Common myeloid progenitor, CD34-positive (primary cell): ENCODE measurements at regions of chrX and their contacts with region 1.

Region 1: DNA sequence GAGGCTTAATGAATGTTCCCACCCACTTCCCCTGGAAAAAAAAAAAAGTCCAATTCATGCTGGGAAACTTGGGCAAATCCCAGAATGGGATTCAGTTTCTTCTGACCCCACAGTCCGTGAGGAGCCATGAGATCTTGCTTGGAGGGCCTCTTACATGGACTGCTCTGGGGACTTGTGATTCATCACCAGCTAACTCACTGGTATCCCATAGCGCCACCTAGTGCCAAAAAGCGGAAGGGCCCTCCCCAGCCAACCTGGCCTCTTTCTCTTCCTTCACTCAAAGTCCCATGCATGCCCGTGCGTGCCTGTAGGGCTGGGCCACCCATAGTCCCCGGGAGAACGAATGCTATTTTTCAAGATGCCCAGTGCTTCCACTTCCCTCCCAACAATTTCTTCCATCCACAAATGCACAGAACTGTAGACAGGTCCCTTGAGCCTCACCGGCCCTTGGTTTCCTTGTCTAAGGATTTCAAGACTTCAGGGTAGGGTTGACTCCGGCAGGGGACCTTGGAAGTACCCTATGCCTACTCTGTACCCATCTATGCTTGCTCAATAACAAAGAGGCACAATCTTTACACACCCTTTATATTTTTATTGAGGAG is 5.1 kb downstream of the RTL5 start:
- DNase-seq: peak; percentile 73 to 89 (median 81)
- H3K4me3 ChIP-seq: peak overlapping the region in 1 of 7 experiments; percentile 5
- H3K27ac ChIP-seq: no peak overlapping the region
- H3K4me1 ChIP-seq: peaks cover 22 to 80% (median 58%) of the 10 kb centered on the region in 4 experiments
- H3K27me3 ChIP-seq: peaks cover 0 to 33% (median 0%) of the 10 kb centered on the region in 5 experiments

Region 2: GRCh38 chrX:71547339-71547738 is 579.3 kb before region 1 on chrX:
- CTCF ChIA-PET with region 1: no interaction called
- POLR2A ChIA-PET with region 1: no interaction called
- DNase-seq: no peak
- H3K4me3 ChIP-seq: no peak overlapping the region
- H3K27ac ChIP-seq: no peak overlapping the region
- H3K4me1 ChIP-seq: peaks cover 0 to 4% (median 0%) of the 10 kb centered on the region in 4 experiments
- H3K27me3 ChIP-seq: no peaks in the 10 kb centered on the region

Region 3: DNA sequence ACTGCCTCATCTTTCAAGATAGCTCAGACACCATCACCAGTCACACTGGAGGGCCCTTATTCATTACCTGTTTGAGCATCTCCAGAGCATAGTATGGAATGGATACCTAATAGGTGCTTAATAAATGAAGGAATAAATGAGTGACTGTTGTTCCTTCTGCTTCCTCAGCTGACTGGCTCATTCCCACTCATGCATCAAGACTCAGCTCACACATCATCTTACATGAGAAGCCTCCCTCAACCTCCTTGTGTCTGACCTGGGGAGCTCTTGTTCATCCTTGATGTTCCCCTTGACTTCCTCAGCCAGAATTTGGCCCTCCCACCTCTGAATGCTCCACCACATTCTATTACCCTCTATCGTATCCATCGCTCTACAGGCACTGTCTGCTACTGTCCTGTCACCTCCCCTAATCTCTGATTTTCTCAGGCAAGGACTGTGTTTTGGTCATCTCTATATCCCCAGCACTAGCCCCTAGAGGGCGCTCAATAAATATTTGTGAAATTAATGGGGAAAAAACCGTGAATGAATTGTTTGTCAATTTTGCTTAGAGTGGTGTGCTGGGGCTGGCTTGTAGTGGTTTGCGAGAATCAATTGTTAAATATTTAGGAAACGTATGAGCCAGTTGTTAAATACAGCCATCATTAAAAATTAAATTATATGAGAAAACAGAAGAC is 127.7 kb before region 1 on chrX:
- CTCF ChIA-PET with region 1: interaction called, 34 read pairs
- POLR2A ChIA-PET with region 1: no interaction called
- DNase-seq: peak; percentile 28 to 53 (median 31)
- H3K4me3 ChIP-seq: no peak overlapping the region
- H3K27ac ChIP-seq: no peak overlapping the region
- H3K4me1 ChIP-seq: peaks cover 0 to 9% (median 0%) of the 10 kb centered on the region in 4 experiments
- H3K27me3 ChIP-seq: peaks cover 0 to 3% (median 0%) of the 10 kb centered on the region in 5 experiments

Region 4: DNA sequence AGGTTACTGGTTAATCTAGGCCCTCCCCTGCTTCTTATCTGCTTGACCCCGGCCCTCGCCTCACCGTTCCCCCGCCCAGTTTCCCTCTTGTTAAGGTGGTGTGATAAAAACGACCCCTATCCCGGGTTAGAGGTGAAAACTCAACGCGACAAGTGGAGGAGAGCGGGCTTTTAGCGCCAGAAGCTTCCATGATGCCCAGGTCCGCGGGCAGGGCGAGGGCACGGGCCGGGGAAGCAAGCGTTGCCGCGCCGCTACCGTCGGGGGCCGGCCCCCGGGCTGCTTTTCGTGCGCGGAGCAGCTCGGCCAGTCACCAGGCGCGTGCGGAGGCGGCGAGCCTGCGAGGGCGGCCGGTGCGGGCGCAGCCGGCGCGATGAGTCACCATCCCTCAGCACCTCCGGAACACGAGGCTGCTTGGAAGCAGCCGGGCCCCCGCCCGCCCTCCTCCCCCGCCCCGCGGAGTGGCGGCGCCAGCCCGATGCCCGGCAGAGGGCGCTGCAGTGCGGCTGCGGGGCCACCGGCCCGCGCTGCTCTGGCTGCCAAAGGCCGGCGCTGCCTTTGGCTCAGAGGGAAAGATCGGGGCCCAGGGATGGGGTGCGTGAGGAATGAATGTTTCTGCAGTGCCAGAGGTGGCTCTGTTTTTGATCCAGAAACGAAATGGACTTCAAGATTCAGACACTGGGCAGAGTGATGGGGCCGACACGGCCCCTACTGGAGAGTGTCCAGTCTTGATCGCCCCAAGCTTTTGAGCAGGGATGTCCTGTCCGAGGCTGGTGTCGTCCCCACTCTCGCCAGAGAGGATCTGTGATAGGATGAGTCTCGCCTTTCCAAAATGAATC is 108.1 kb before region 1 on chrX:
- CTCF ChIA-PET with region 1: interaction called, 127 read pairs
- POLR2A ChIA-PET with region 1: no interaction called
- DNase-seq: peak; percentile 85 to 94 (median 94)
- H3K4me3 ChIP-seq: peak overlapping the region in 1 of 7 experiments; percentile 10
- H3K27ac ChIP-seq: no peak overlapping the region
- H3K4me1 ChIP-seq: peaks cover 4 to 31% (median 16%) of the 10 kb centered on the region in 4 experiments
- H3K27me3 ChIP-seq: peaks cover 0 to 31% (median 0%) of the 10 kb centered on the region in 5 experiments

Region 5: DNA sequence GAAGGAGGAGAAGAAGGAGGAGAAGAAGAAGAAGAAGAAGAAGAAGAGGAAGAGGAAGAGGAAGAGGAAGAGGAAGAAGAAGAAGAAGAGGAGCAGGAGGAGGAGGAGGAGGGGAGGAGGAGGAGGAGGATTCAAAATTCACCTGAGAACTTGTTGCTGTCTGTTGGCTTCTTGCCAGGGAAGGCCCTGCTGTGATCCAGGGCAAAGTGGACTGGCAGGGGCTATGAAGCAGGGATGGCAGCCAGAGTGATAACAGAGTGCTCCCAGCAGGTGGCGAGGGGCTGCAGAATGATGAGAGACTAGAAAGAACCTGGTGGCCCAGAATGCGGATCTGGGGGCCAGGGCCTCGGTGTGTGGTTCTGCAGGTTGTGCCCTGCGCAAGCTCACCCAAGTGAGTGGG is 77.7 kb before region 1 on chrX:
- CTCF ChIA-PET with region 1: interaction called, 20 read pairs
- POLR2A ChIA-PET with region 1: no interaction called
- DNase-seq: peak; percentile 14 to 36 (median 33)
- H3K4me3 ChIP-seq: no peak overlapping the region
- H3K27ac ChIP-seq: no peak overlapping the region
- H3K4me1 ChIP-seq: peaks cover 4 to 37% (median 20%) of the 10 kb centered on the region in 4 experiments
- H3K27me3 ChIP-seq: peaks cover 0 to 23% (median 0%) of the 10 kb centered on the region in 5 experiments

Region 6: DNA sequence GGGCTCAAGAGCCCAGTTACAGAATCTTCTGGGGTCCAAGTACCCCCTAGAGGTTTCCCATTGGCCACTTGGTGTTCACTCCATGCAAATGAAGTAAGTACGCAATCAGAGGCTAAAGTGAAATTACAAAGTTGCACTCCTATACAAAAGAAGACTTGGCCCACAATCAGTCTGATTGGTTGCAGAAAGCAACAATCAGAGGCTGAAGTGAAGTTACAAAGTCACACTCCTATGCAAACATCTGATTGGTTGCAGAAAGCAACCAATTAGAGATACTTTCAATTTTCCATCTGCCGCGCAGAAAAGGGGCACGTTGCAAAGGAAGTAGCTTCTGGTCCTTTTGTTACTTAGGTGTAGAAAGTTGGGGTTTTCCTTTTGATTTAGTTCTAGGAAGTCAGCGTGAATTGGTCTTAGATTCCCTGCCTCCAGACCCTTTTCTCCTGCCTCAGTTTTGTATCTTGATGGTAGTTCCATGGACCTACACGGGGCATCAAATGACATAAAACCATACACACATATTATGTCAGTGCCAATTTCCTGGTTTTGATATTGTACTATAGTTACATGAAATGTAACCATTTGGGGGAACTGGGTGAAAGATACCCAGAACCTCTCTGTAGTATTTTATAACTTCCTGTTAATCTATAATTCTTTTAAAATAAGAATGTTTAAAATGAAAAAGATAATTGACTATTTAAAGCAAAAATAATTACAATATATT is 42.5 kb after region 1 on chrX:
- CTCF ChIA-PET with region 1: no interaction called
- POLR2A ChIA-PET with region 1: no interaction called
- DNase-seq: peak; percentile 14 to 64 (median 63)
- H3K4me3 ChIP-seq: peak overlapping the region in 1 of 7 experiments; percentile 33
- H3K27ac ChIP-seq: no peak overlapping the region
- H3K4me1 ChIP-seq: no peaks in the 10 kb centered on the region
- H3K27me3 ChIP-seq: peaks cover 0 to 10% (median 0%) of the 10 kb centered on the region in 5 experiments